Activated naive CD4-positive, alpha-beta T cell treated with anti-CD3 and anti-CD28 coated beads for 36 hours (primary cell): ENCODE measurements at regions of chr11 and their contacts with region 1.

Region 1: GRCh38 chr11:124758317-124759203 is 3.5 kb downstream of the ESAM start:
- DNase-seq: peak; percentile 80
- H3K4me3 Mint-ChIP-seq: peak overlapping the region; percentile 56
- H3K27ac Mint-ChIP-seq: no peak overlapping the region
- H3K4me1 Mint-ChIP-seq: peaks cover 30% of the 10 kb centered on the region
- H3K27me3 Mint-ChIP-seq: peaks cover 45% of the 10 kb centered on the region

Region 2: GRCh38 chr11:124114942-124115781 is 643.4 kb before region 1 on chr11 and contains the start of gene VWA5A:
- CTCF ChIA-PET with region 1: no interaction called
- intact Hi-C with region 1: loop called (anchors 10 kb)
- DNase-seq: peak; percentile 93
- H3K4me3 Mint-ChIP-seq: peak within 1 kb of the TSS; percentile 82
- H3K27ac Mint-ChIP-seq: peak within 1 kb of the TSS; percentile 56
- H3K4me1 Mint-ChIP-seq: peaks cover 9% of the 10 kb centered on the region
- H3K27me3 Mint-ChIP-seq: no peaks in the 10 kb centered on the region
- total RNA-seq, gene VWA5A: 9.7 to 11.4 TPM

Region 3: GRCh38 chr11:124716591-124716990 is 42.0 kb before region 1 on chr11:
- CTCF ChIA-PET with region 1: no interaction called
- intact Hi-C with region 1: no loop called
- DNase-seq: no peak
- H3K4me3 Mint-ChIP-seq: no peak overlapping the region
- H3K27ac Mint-ChIP-seq: no peak overlapping the region
- H3K4me1 Mint-ChIP-seq: peaks cover 11% of the 10 kb centered on the region
- H3K27me3 Mint-ChIP-seq: peaks cover 26% of the 10 kb centered on the region

Region 4: DNA sequence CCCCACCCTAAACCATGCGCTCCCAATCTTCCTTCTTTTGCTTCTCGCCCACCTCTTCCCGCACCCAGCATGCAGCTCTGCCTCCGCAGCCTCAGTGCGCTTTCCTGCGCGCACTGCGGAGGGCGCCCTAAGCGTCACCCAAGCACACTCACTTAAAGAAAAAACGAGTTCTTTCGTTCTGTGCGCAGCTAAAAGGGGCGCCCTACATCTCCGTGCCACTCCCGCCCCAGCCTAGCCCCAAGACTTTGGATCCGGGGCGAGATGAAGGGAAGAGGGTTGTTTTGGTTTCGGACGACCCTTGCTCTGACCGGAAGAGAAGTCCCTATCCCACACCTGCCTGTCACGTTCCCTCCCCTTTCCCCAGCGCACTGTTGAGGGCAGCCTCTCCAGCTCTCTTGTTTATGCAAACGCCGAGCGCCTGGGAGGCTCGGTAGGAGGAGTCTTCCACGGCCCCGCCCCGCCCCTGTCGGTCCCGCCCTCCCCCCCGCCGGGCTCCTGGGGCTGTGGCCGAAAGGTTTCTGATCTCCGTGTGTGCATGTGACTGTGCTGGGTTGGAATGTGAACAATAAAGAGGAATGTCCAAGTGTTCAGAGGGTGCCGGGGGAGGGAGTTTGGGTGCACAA is 11.8 kb before region 1 on chr11:
- CTCF ChIA-PET with region 1: interaction called, 27 read pairs
- intact Hi-C with region 1: loop called (anchors 1 kb)
- DNase-seq: peak; percentile 76
- H3K4me3 Mint-ChIP-seq: peak overlapping the region; percentile 83
- H3K27ac Mint-ChIP-seq: peak overlapping the region; percentile 75
- H3K4me1 Mint-ChIP-seq: peaks cover 14% of the 10 kb centered on the region
- H3K27me3 Mint-ChIP-seq: no peaks in the 10 kb centered on the region

Region 5: DNA sequence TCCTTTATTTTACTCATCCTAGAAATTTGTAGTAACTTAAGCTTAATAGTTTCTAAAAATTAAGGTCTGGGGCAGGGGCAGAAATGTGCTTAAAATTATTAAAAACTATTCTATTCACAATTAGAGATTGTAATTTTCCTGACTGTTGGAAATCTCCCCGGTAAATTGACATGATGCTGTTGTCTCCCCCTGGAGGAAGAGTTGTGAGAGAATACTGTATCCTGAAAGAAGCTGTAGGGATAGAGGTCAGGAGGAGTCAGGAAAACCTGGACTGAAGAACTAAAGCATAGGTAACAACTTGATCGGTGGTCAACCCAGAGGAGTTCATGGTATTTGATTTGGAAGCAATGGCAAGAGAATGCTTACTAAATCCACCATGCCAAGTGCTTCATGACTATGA is 19.7 kb after region 1 on chr11:
- CTCF ChIA-PET with region 1: interaction called, 11 read pairs
- intact Hi-C with region 1: no loop called
- DNase-seq: no peak
- H3K4me3 Mint-ChIP-seq: no peak overlapping the region
- H3K27ac Mint-ChIP-seq: no peak overlapping the region
- H3K4me1 Mint-ChIP-seq: peaks cover 21% of the 10 kb centered on the region
- H3K27me3 Mint-ChIP-seq: no peaks in the 10 kb centered on the region

Region 6: GRCh38 chr11:124865921-124866583 is 107.5 kb after region 1 on chr11:
- CTCF ChIA-PET with region 1: interaction called, 5 read pairs
- intact Hi-C with region 1: loop called (anchors 1 kb)
- DNase-seq: peak; percentile 62
- H3K4me3 Mint-ChIP-seq: peak overlapping the region; percentile 42
- H3K27ac Mint-ChIP-seq: no peak overlapping the region
- H3K4me1 Mint-ChIP-seq: peaks cover 37% of the 10 kb centered on the region
- H3K27me3 Mint-ChIP-seq: peaks cover 92% of the 10 kb centered on the region

Region 7: GRCh38 chr11:125592305-125593112 is 833.9 kb after region 1 on chr11 and contains the start of gene STT3A:
- CTCF ChIA-PET with region 1: no interaction called
- intact Hi-C with region 1: no loop called
- DNase-seq: peak; percentile 99
- H3K4me3 Mint-ChIP-seq: peak within 1 kb of the TSS; percentile 100
- H3K27ac Mint-ChIP-seq: peak within 1 kb of the TSS; percentile 92
- H3K4me1 Mint-ChIP-seq: peaks cover 51% of the 10 kb centered on the region
- H3K27me3 Mint-ChIP-seq: no peaks in the 10 kb centered on the region
- total RNA-seq, gene STT3A: 111 to 113 TPM